Pancreas (tissue), 10 donors: ENCODE measurements at regions of chr9 and their contacts with region 1.

Region 1: DNA sequence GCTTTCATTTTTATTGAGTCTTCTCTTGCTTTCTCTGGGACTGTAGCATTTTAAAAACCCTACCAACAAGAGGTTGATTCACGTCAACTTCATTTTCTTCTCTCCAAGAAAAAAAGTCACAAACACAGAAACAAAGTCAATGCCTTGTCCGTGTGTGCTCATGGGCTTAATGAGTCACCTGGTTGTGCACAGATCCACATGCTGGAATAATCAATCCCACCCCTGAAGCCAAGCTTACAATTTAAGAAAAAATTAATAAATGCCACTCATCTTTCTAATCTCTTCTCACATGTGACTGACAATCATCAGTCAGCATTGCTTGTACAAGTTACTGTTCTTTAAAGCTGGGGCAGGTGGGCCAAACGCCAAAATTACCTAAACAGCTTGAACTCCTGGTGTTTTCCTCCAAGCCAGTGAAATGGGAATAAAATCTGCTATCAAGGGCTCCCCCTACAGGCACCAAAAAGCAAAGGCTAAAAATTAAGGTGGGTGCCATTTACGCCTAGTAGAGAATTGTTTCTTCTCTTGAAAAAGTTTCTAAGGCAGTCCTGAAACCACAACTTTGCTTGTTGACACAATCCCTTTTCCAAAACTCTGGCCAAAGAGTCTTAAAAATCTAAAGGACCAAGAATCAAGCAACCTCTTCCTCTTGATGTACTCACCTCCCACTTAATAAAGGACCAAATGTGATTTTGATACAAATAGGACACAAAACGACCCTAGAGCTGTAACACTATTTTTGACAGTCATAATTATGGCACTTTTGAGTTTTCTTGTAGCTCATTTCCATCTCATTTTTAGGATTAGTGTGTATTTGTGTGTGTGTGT is 21.3 kb downstream of the TRMO start:
- DNase-seq: peak in 3 of 6 donors; percentile 15 to 40 (median 31)
- ATAC-seq: peak; percentile 63 to 83 (median 81)
- H3K4me3 ChIP-seq: no peak overlapping the region
- H3K27ac ChIP-seq: no peak overlapping the region
- H3K4me1 ChIP-seq: no peaks in the 10 kb centered on the region
- H3K27me3 ChIP-seq: no peaks in the 10 kb centered on the region
- CTCF ChIP-seq: peak; percentile 26 to 67 (median 50)

Region 2: DNA sequence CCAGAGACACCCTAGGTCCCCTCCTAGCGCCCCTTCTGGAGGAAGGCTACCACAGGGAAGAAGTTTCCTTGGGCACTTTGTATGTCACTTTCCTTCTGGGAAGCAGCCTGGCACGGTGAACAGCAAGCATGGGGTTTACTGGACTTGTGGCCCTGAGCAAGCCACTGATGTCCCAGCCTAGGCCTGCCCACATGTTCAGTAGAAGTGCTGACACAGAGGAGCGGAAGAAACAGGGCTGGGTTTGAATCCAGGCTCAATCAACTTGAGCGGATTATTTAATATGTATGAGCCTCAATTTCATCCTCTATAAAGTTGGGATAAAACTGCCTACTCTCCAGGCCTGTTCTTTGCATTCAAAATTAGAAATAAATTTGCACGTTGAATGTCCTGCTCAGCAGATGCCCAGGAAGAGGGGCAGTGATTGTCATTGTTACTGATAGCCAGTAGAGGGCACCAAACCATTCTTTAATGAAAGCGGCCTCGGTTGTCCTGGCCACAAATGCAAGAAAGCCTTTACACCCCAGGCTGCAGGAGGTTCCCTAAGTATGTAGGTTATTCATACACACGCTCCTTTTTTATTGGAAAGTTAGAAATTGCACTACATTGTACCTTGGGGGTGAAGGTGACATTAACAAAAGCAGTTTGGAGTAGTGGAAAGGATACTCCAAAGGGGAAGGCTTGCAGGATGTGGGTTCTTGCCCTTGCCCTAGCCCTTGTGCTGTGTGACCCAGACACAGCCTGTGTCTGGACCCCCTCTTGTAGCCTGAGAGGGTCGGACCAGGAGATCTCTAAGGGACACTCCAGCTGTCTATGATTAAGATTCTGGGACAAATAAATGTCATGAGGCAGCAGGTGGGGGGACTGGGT is 190.4 kb before region 1 on chr9:
- intact Hi-C with region 1: loop called in 2 of 3 experiments (anchors 5 kb)
- DNase-seq: peak in 3 of 6 donors; percentile 21 to 58 (median 37)
- ATAC-seq: peak; percentile 82 to 99 (median 96)
- H3K4me3 ChIP-seq: no peak overlapping the region
- H3K27ac ChIP-seq: no peak overlapping the region
- H3K4me1 ChIP-seq: no peaks in the 10 kb centered on the region
- H3K27me3 ChIP-seq: peaks cover 0 to 3% (median 0%) of the 10 kb centered on the region in 4 donors
- CTCF ChIP-seq: peak; percentile 71 to 88 (median 78)

Region 3: DNA sequence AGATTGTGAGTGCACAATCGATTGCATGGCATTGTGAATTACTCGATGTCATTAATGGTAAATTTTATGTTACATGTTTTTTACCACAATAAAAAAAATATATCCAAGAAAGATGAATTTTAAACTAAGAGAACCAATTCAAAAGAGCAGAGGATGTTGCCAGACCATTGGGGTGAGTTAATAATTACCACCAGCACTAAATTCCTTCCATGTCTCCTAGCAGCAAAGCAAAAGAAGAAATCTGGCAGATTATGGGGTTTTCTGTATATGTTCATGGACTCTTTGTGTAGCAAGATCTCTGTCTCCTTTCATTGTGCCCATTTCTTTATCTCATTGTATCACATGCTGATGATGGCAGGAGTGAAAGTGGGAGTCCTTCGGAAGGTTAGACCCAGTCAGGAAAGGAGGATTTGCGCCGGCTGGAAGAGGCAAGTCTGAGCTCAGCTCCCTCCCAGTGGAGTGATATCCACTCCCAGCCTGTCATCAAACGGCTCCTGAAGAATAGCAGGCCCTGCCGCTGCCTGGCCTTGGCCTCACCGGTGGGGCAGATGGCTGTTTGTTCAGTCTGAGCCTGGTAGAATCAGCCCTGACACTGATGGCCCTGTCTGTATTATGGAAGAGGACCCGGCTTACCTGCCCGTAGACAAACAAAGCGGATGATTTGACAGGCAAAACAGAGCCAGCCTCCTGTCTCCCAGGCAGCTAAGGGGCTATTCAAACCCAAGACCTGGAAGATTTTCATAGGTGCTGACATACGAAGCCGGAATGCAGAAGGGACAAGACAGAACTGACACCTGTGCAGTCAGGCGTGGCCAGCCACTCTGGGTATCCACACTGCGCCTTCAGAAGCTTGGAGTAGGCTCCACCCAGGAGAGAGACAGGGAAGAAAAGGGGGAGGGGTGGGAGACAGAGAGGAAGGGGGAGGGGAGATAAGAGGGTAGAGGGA is 69.8 kb before region 1 on chr9:
- intact Hi-C with region 1: no loop called
- DNase-seq: no peak
- ATAC-seq: peak in 3 of 4 donors; percentile 69 to 76 (median 72)
- H3K4me3 ChIP-seq: peak overlapping the region in 1 of 4 donors; percentile 12
- H3K27ac ChIP-seq: peak overlapping the region in 2 of 4 donors; percentile 29 to 41
- H3K4me1 ChIP-seq: no peaks in the 10 kb centered on the region
- H3K27me3 ChIP-seq: no peaks in the 10 kb centered on the region
- CTCF ChIP-seq: no peak